ENCODE measurements at regions of chr3 and their contacts with region 1.

Region 1: GRCh38 chr3:160003520-160004128 is 15.0 kb downstream of the IL12A start:
- DNase-seq: peak; percentile 57
- H3K4me3 ChIP-seq: peak overlapping the region in 1 of 2 experiments; percentile 23; a peak in 1 of 4 replicates
- H3K27ac ChIP-seq: no peak overlapping the region
- H3K4me1 ChIP-seq: peaks cover 0 to 11% of the 10 kb centered on the region in 2 experiments; a peak in 2 of 4 replicates
- H3K27me3 ChIP-seq: no peaks in the 10 kb centered on the region
- CTCF ChIP-seq: peak; percentile 80
- EP300 ChIP-seq: no peak
- RAD21 ChIP-seq: peak; percentile 72

Region 2: DNA sequence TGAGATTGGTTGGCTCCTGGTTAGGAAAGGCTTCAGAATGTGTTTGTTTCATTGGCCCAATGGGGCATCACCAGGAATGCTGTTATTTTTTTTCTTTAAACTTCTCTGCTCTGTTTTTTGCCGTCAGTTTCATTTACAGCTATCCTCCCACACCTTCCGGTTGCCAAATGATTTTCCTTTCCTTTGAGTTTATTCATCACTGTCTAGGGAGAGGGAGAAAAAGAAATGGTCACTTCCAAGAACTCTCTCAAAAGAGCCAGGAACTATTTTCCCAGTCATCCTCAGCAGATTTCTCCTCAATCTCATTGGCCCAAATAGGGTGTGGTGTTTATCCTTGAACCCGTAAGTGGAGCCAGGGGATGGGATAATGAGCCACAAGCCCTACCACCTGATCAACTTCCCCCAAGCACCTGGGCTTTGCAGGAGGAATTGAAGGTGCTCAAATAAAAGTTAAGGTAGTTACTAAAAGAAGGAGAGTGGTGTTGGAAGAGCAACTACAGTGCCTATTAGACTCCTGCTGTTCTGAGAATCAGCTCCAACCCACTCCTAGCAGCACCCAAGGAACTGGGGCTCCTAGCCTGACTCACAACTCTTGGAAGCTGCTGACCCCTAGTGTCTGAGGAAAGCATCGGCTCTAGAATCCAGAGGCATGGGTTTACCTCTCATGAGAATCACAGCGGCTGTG is 198.8 kb before region 1 on chr3:
- CTCF ChIA-PET with region 1: interaction called, 39 read pairs
- POLR2A ChIA-PET with region 1: no interaction called
- DNase-seq: peak; percentile 71
- H3K4me3 ChIP-seq: no peak overlapping the region; a peak in 1 of 4 replicates
- H3K27ac ChIP-seq: no peak overlapping the region
- H3K4me1 ChIP-seq: peaks cover 0 to 2% of the 10 kb centered on the region in 2 experiments; a peak in 1 of 4 replicates
- H3K27me3 ChIP-seq: no peaks in the 10 kb centered on the region
- CTCF ChIP-seq: peak; percentile 95
- EP300 ChIP-seq: no peak
- RAD21 ChIP-seq: peak; percentile 99

Region 3: GRCh38 chr3:159839561-159840379 is 163.9 kb before region 1 on chr3:
- CTCF ChIA-PET with region 1: interaction called, 22 read pairs
- POLR2A ChIA-PET with region 1: no interaction called
- DNase-seq: peak; percentile 81
- H3K4me3 ChIP-seq: peak within 1 kb of the TSS; percentile 65 to 67
- H3K27ac ChIP-seq: peak within 1 kb of the TSS; percentile 47 to 99; a peak in 3 of 4 replicates
- H3K4me1 ChIP-seq: peaks cover 21 to 31% of the 10 kb centered on the region in 2 experiments; a peak in 3 of 4 replicates
- H3K27me3 ChIP-seq: no peaks in the 10 kb centered on the region
- CTCF ChIP-seq: no peak
- EP300 ChIP-seq: peak in 1 of 2 experiments; percentile 45; a peak in 1 of 4 replicates
- RAD21 ChIP-seq: peak; percentile 39

Region 4: DNA sequence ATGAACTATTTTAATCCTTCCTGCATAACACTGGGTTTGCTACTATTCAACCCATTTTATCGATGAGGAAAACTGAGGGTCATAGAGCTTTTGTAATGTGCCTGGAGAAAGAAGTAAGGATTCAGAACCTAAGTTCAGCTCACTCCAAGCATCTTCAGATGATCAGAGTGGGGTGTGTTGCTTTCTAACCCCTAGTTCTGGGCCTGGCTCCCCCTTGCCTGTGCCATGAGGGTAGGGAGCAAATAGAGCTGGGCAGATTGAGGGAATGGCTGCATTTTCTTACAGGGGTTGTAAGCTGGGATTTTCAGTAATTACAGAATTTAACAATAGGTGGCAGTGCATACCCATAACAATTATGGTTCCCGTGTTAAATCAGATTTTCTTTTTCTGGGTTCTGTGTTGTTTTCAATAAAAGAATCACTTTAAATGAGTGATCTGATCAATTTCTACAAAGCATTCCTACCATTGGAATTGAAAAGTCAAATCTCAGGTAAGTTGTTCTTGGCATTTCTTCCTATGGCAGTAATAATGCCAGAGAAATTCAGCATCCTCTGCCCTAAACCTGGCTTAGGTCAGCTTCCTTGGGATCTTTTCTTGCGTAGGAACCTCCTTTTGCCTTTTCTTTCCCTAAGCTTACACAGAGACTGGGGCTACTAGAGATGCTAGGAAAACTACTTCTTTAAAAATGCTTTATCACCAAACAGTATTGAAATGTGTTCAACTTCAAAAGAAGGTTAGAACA is 118.8 kb before region 1 on chr3:
- CTCF ChIA-PET with region 1: interaction called, 270 read pairs
- POLR2A ChIA-PET with region 1: interaction called, 14 read pairs
- DNase-seq: peak; percentile 52
- H3K4me3 ChIP-seq: no peak overlapping the region
- H3K27ac ChIP-seq: peak overlapping the region in 1 of 2 experiments; percentile 97; a peak in 2 of 4 replicates
- H3K4me1 ChIP-seq: peaks cover 32 to 51% of the 10 kb centered on the region in 2 experiments
- H3K27me3 ChIP-seq: no peaks in the 10 kb centered on the region
- CTCF ChIP-seq: peak; percentile 73
- EP300 ChIP-seq: no peak
- RAD21 ChIP-seq: peak; percentile 73

Region 5: GRCh38 chr3:160022068-160022467 is 18.4 kb after region 1 on chr3:
- CTCF ChIA-PET with region 1: interaction called, 24 read pairs
- POLR2A ChIA-PET with region 1: no interaction called
- DNase-seq: no peak
- H3K4me3 ChIP-seq: no peak overlapping the region
- H3K27ac ChIP-seq: no peak overlapping the region
- H3K4me1 ChIP-seq: no peaks in the 10 kb centered on the region
- H3K27me3 ChIP-seq: no peaks in the 10 kb centered on the region
- CTCF ChIP-seq: no peak
- EP300 ChIP-seq: no peak
- RAD21 ChIP-seq: no peak